Common myeloid progenitor, CD34-positive (primary cell): ENCODE measurements at regions of chr11 and their contacts with region 1.

Region 1: GRCh38 chr11:94897330-94897768 is 76.0 kb downstream of the CWC15 start:
- DNase-seq: peak; percentile 34 to 62 (median 58)
- H3K4me3 ChIP-seq: no peak overlapping the region
- H3K27ac ChIP-seq: no peak overlapping the region
- H3K4me1 ChIP-seq: no peaks in the 10 kb centered on the region
- H3K27me3 ChIP-seq: no peaks in the 10 kb centered on the region

Region 2: DNA sequence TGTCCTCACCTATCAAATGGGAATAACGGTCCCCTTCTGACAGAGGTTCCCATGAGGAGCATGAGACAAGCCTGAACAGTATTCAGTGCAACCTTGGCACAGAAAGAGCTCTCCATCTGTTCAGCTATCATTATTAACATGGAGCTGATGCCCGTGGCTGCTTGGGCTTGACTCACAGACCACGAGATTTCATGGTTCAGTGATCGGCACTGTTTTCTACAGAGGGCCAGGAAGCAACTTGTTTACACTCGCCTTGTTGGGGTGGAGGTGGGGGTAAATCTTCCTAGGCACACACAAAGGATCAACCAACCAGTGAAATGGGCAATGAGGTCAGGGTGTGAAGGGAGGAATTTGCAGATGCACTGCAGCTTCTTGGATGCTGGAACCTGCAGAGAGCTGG is 12.2 kb before region 1 on chr11:
- CTCF ChIA-PET with region 1: interaction called, 28 read pairs
- POLR2A ChIA-PET with region 1: no interaction called
- DNase-seq: peak in 1 of 3 donors; percentile 8
- H3K4me3 ChIP-seq: no peak overlapping the region
- H3K27ac ChIP-seq: no peak overlapping the region
- H3K4me1 ChIP-seq: peaks cover 5 to 16% (median 16%) of the 10 kb centered on the region in 4 experiments
- H3K27me3 ChIP-seq: no peaks in the 10 kb centered on the region

Region 3: DNA sequence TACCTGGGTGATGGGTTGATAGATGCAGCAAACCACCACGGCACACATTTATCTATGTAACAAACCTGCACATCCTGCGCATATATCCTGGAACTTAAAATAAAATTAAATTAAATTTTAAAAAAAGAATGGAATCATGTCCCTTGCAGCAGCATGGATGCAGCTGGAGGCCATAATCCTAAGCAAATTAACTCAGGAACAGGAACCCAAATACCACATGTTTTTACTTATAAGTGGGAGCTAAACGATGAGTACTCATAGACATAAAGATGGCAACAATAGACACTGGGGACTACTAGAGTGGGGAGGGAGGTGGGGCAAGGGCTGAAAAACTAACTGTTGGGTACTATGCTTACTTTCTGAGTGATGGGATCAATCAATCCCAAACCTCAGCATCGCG is 35.2 kb after region 1 on chr11:
- CTCF ChIA-PET with region 1: interaction called, 11 read pairs
- POLR2A ChIA-PET with region 1: no interaction called
- DNase-seq: no peak
- H3K4me3 ChIP-seq: no peak overlapping the region
- H3K27ac ChIP-seq: no peak overlapping the region
- H3K4me1 ChIP-seq: peaks cover 6 to 35% (median 22%) of the 10 kb centered on the region in 4 experiments
- H3K27me3 ChIP-seq: no peaks in the 10 kb centered on the region

Region 4: GRCh38 chr11:94997437-94997836 is 100.1 kb after region 1 on chr11:
- CTCF ChIA-PET with region 1: no interaction called
- POLR2A ChIA-PET with region 1: no interaction called
- DNase-seq: peak in 2 of 3 donors; percentile 1 to 4
- H3K4me3 ChIP-seq: no peak overlapping the region
- H3K27ac ChIP-seq: no peak overlapping the region
- H3K4me1 ChIP-seq: no peaks in the 10 kb centered on the region
- H3K27me3 ChIP-seq: no peaks in the 10 kb centered on the region